Heart left ventricle (tissue), 16 donors: ENCODE measurements at regions of chr11 and their contacts with region 1.

Region 1: GRCh38 chr11:61747192-61747966 is 5.1 kb upstream of the MYRF start:
- DNase-seq: peak; percentile 71 to 89 (median 83)
- ATAC-seq: peak; percentile 72 to 89 (median 84)
- H3K4me3 ChIP-seq: no peak overlapping the region
- H3K27ac ChIP-seq: peak overlapping the region in 1 of 12 donors; percentile 9
- H3K4me1 ChIP-seq: peaks cover 0 to 12% (median 6%) of the 10 kb centered on the region in 12 donors
- H3K27me3 ChIP-seq: peaks cover 0 to 5% (median 0%) of the 10 kb centered on the region in 9 donors
- CTCF ChIP-seq: peak; percentile 74 to 91 (median 84)
- POLR2A ChIP-seq: no peak

Region 2: GRCh38 chr11:62108017-62108750 is 360.8 kb after region 1 on chr11:
- intact Hi-C with region 1: loop called in 8 of 10 experiments (anchors 2 to 5 kb)
- DNase-seq: peak in 2 of 5 donors; percentile 39 to 59
- ATAC-seq: peak in 2 of 4 donors; percentile 50 to 51
- H3K4me3 ChIP-seq: no peak overlapping the region
- H3K27ac ChIP-seq: peak overlapping the region in 5 of 12 donors; percentile 14 to 70 (median 27)
- H3K4me1 ChIP-seq: peaks cover 4 to 51% (median 20%) of the 10 kb centered on the region in 12 donors
- H3K27me3 ChIP-seq: no peaks in the 10 kb centered on the region
- CTCF ChIP-seq: peak; percentile 78 to 91 (median 82)
- POLR2A ChIP-seq: no peak